Activated CD8-positive, alpha-beta T cell treated with anti-CD3 and anti-CD28 coated beads for 36 hours (primary cell): ENCODE measurements at regions of chr7 and their contacts with region 1.

Region 1: GRCh38 chr7:37186753-37187152 is 261.9 kb downstream of the ELMO1 start:
- DNase-seq: no peak
- ATAC-seq: no peak
- H3K4me3 Mint-ChIP-seq: no peak overlapping the region
- H3K27ac Mint-ChIP-seq: no peak overlapping the region
- H3K4me1 Mint-ChIP-seq: peaks cover 13% of the 10 kb centered on the region
- H3K27me3 Mint-ChIP-seq: no peaks in the 10 kb centered on the region
- CTCF ChIP-seq: no peak

Region 2: GRCh38 chr7:37201003-37201875 is 14.5 kb after region 1 on chr7:
- CTCF ChIA-PET with region 1: interaction called, 33 read pairs
- POLR2A ChIA-PET with region 1: no interaction called
- intact Hi-C with region 1: no loop called
- DNase-seq: peak; percentile 67
- ATAC-seq: peak; percentile 62
- H3K4me3 Mint-ChIP-seq: no peak overlapping the region
- H3K27ac Mint-ChIP-seq: peak overlapping the region; percentile 8
- H3K4me1 Mint-ChIP-seq: peaks cover 10% of the 10 kb centered on the region
- H3K27me3 Mint-ChIP-seq: no peaks in the 10 kb centered on the region
- CTCF ChIP-seq: peak; percentile 63

Region 3: GRCh38 chr7:37216923-37217322 is 30.2 kb after region 1 on chr7:
- CTCF ChIA-PET with region 1: no interaction called
- POLR2A ChIA-PET with region 1: no interaction called
- intact Hi-C with region 1: no loop called
- DNase-seq: no peak
- ATAC-seq: no peak
- H3K4me3 Mint-ChIP-seq: no peak overlapping the region
- H3K27ac Mint-ChIP-seq: no peak overlapping the region
- H3K4me1 Mint-ChIP-seq: peaks cover 2% of the 10 kb centered on the region
- H3K27me3 Mint-ChIP-seq: no peaks in the 10 kb centered on the region
- CTCF ChIP-seq: no peak